ENCODE measurements at regions of chr12 and their contacts with region 1.

Region 1: GRCh38 chr12:15208125-15208524 is 13.1 kb downstream of the RERG start:
- DNase-seq: no peak
- H3K4me3 ChIP-seq: no peak overlapping the region
- H3K27ac ChIP-seq: peak overlapping the region; percentile 65 to 83 (median 72)
- H3K4me1 ChIP-seq: peaks cover 0 to 76% (median 65%) of the 10 kb centered on the region in 4 donors
- H3K27me3 ChIP-seq: no peaks in the 10 kb centered on the region
- CTCF ChIP-seq: peak in 3 of 4 experiments; percentile 12 to 41 (median 38)
- EP300 ChIP-seq: no peak
- POLR2A ChIP-seq: no peak

Region 2: DNA sequence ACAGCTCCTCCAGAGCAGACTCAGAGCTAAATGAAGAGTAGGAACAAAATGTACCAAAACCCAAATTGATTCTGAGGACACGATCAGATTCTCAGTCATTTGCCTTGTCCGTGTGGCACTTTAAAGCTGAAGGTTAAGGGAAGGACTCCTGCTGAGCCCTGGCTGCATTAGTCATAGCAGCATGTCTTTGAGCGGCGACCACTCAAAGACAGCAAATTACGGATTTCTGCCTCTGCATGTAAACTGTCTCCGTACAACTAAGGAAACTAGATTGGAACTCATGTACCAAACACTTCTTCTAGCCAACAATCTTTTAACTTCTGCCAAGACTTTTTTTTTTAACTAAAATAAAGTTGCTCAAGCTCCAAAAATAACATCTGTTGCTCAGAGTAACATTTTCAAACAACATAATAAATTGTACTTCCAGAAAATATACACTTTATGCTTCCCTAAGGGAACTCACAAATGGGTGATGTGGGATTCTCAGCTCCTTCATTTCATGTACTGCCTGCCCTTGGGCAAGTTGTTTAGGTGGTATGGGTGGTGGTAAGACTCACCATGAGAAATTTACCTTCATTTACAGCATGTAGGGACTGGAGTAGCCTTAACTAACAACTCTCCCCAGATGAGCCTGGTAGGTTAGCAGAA is 43.0 kb before region 1 on chr12:
- intact Hi-C with region 1: loop called (anchors 5 kb)
- DNase-seq: peak; percentile 78
- H3K4me3 ChIP-seq: peak overlapping the region in 2 of 4 donors; percentile 14 to 15
- H3K27ac ChIP-seq: peak overlapping the region; percentile 68 to 82 (median 77)
- H3K4me1 ChIP-seq: peaks cover 0 to 87% (median 71%) of the 10 kb centered on the region in 4 donors
- H3K27me3 ChIP-seq: no peaks in the 10 kb centered on the region
- CTCF ChIP-seq: no peak
- EP300 ChIP-seq: peak in 2 of 4 donors; percentile 27 to 56
- POLR2A ChIP-seq: no peak

Region 3: GRCh38 chr12:16586350-16587109 is 1378.4 kb after region 1 on chr12:
- intact Hi-C with region 1: loop called (anchors 10 kb)
- DNase-seq: peak; percentile 88
- H3K4me3 ChIP-seq: peak overlapping the region in 2 of 4 donors; percentile 22 to 23
- H3K27ac ChIP-seq: peak overlapping the region; percentile 72 to 91 (median 84)
- H3K4me1 ChIP-seq: peaks cover 0 to 77% (median 48%) of the 10 kb centered on the region in 4 donors
- H3K27me3 ChIP-seq: no peaks in the 10 kb centered on the region
- CTCF ChIP-seq: no peak
- EP300 ChIP-seq: peak; percentile 49 to 82 (median 66)
- POLR2A ChIP-seq: no peak